Left cardiac atrium (tissue), 4 donors: ENCODE measurements at regions of chr14 and their contacts with region 1.

Region 1: GRCh38 chr14:20454516-20455354 is at the starts of genes APEX1 and OSGEP:
- DNase-seq: peak; percentile 99
- ATAC-seq: peak; percentile 96
- total RNA-seq, gene APEX1: 68.3 to 91.5 TPM
- total RNA-seq, gene OSGEP: 15.4 to 23.5 TPM

Region 2: GRCh38 chr14:20343092-20343861 is 111.5 kb before region 1 on chr14 and contains the start of gene PARP2:
- intact Hi-C with region 1: loop called in 1 of 2 experiments (anchors 10 kb)
- DNase-seq: peak; percentile 98
- ATAC-seq: peak; percentile 95 to 98
- total RNA-seq, gene PARP2: 12.5 to 13.6 TPM

Region 3: GRCh38 chr14:20413045-20413799 is 41.5 kb before region 1 on chr14 and contains the start of gene TEP1:
- intact Hi-C with region 1: loop called in 1 of 2 experiments (anchors 2 kb)
- DNase-seq: peak; percentile 94
- ATAC-seq: peak; percentile 97
- total RNA-seq, gene TEP1: 13.1 to 17.1 TPM

Region 4: DNA sequence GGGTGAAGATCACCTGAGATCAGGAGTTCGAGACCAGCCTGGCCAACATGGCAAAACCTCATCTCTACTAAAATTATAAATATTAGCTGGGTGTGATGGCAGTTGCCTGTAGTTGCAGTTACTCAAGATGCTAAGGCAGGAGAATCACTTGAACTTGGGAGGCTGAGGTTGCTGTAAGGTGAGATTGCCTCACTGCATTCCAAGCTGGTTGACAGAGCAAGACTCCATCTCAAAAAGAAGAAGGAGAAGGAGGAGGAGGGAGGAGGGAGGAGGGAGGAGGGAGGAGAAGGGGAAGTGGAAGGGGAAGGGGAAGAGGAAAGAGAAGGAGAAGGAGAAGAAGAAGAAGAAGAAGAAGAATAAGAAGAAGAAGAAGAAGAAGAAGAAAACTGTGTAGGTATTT is 67.6 kb after region 1 on chr14:
- intact Hi-C with region 1: no loop called
- DNase-seq: no peak
- ATAC-seq: no peak